Posterior vena cava (tissue), 2 donors: ENCODE measurements at regions of chr2 and their contacts with region 1.

Region 1: DNA sequence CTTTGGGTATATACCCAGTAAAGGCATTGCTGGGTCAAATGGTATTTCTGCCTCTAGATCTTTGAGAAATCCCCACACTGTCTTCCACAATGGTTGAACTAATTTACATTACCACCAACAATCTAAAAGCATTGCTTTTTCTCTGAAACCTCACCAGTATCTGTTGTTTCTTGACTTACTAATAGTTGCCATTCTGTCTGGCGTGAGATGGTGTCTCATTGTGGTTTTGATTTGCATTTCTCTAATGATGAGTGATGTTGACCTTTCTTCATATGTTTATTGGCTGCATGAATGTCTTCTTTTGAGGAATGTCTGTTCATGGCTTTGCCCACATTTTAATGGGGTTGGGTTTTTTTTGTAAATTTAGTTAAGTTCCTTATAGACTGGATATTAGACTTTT is 382.6 kb upstream of the ZNF804A start:
- DNase-seq: no peak

Region 2: GRCh38 chr2:184346338-184346862 is 130.7 kb after region 1 on chr2:
- intact Hi-C with region 1: no loop called
- DNase-seq: no peak

Region 3: GRCh38 chr2:184599872-184600222 is 384.1 kb after region 1 on chr2:
- intact Hi-C with region 1: no loop called
- DNase-seq: no peak

Region 4: DNA sequence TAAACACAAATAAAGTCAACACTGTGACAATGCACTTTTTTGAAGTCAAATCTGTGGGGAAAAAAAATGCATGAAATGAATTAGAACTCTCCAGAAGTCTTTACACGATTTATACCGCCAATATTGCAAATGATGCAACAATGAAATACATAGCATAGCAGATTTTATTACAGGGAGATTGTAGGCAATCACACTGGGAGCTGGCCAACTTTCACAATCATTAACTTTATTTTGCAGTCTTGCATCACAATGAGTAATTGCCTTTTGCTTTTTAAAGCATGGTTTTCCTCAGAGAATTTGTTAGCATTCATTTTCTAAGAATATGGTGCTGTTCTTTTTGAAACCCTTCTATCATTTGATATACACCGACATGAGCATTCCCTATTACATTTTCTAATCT is 1156.4 kb after region 1 on chr2:
- intact Hi-C with region 1: loop called in 1 of 2 experiments (anchors 5 kb)
- DNase-seq: no peak